CD4-positive, alpha-beta memory T cell (primary cell): ENCODE measurements at regions of chr16 and their contacts with region 1.

Region 1: GRCh38 chr16:88442727-88443576 is 10.1 kb upstream of the ZFPM1 start:
- DNase-seq: peak; percentile 67 to 84 (median 76)
- H3K4me3 ChIP-seq: no peak overlapping the region
- H3K4me3 Mint-ChIP-seq: peak overlapping the region in 1 of 8 donors; percentile 29
- H3K27ac ChIP-seq: no peak overlapping the region
- H3K27ac Mint-ChIP-seq: peak overlapping the region in 2 of 7 donors; percentile 24 to 41
- H3K4me1 ChIP-seq: peaks cover 6% of the 10 kb centered on the region
- H3K4me1 Mint-ChIP-seq: peaks cover 0 to 4% (median 3%) of the 10 kb centered on the region in 4 donors
- H3K27me3 ChIP-seq: no peaks in the 10 kb centered on the region
- H3K27me3 Mint-ChIP-seq: no peaks in the 10 kb centered on the region

Region 2: DNA sequence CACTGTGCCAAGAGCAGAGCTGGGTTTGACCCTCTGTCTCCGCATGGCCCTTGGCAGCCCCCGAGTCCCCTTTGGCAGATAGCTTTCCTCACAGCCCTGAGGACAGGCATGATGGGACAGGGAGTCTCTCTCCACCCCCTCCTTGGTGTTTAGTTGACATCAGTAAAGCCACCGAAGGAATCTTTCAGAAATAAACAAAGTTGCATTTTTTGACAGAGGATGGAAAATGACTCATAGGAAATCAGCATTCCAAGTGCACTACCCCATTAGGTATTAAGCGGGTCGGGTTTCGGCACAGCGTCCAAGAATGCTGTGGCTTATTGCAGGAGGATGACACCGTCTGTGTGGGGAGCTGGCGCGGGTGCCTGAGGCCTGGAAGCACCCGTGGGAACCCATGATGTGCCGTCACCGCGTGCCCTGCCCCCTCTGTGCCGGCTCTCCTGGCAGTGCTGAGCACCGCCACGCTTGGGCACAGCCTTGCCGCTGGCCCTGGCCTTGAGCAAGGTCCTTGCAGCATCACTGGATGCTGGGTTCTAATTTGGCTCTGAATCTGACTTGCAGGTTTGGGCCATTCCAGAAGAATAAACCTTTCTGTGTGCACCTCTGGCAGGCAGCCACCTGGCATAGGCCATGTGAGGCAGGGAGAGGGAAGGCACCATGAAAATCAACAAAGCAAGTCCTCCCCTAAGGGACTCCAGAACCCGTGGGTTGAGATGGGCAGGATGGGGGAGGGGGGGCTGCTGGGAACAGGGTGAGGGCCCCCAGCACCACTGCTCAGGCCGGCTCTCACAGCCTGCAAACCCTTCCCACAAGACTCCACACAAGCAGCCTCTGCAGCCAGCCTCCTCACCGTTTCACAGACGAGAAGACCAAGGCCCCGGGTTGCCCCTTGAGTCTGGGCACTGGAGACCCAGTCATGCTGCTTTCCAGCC is 110.7 kb before region 1 on chr16:
- CTCF ChIA-PET with region 1: no interaction called
- POLR2A ChIA-PET with region 1: no interaction called
- intact Hi-C with region 1: no loop called
- DNase-seq: no peak
- H3K4me3 ChIP-seq: no peak overlapping the region
- H3K4me3 Mint-ChIP-seq: no peak overlapping the region
- H3K27ac ChIP-seq: no peak overlapping the region
- H3K27ac Mint-ChIP-seq: no peak overlapping the region
- H3K4me1 ChIP-seq: no peaks in the 10 kb centered on the region
- H3K4me1 Mint-ChIP-seq: peaks cover 0 to 5% (median 1%) of the 10 kb centered on the region in 4 donors
- H3K27me3 ChIP-seq: no peaks in the 10 kb centered on the region
- H3K27me3 Mint-ChIP-seq: peaks cover 0 to 5% of the 10 kb centered on the region in 2 donors

Region 3: DNA sequence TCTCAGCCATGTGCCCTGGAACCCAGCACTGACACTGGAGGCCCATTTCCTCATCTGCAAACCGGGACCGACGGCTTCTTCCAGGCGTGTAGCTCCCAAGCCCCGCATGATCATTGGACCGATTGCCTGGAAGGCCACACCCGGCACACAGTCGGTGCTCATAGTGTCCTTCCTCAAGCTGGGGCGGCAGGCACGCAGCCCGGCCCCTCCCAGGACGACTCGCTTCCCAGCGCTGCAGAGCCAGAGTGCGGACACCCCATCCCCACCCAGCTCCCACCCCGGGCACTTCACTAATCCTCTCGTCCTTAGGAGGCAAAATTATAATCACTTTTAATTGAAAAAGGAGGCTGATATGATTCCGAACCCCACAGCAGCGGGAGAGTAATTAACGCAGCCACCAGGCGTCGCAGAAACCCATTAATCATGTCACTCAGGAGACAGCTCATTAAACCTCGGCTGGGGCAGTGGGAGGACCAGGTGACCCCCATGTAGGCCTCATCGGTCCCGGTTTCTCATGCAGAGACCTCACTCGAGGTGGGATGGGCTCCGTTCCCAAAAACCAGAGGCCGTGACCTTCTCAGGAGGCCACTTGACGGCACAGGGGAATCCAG is 27.1 kb before region 1 on chr16:
- CTCF ChIA-PET with region 1: no interaction called
- POLR2A ChIA-PET with region 1: no interaction called
- intact Hi-C with region 1: no loop called
- DNase-seq: no peak
- H3K4me3 ChIP-seq: no peak overlapping the region
- H3K4me3 Mint-ChIP-seq: no peak overlapping the region
- H3K27ac ChIP-seq: no peak overlapping the region
- H3K27ac Mint-ChIP-seq: no peak overlapping the region
- H3K4me1 ChIP-seq: no peaks in the 10 kb centered on the region
- H3K4me1 Mint-ChIP-seq: no peaks in the 10 kb centered on the region
- H3K27me3 ChIP-seq: no peaks in the 10 kb centered on the region
- H3K27me3 Mint-ChIP-seq: peaks cover 0 to 4% of the 10 kb centered on the region in 2 donors

Region 4: DNA sequence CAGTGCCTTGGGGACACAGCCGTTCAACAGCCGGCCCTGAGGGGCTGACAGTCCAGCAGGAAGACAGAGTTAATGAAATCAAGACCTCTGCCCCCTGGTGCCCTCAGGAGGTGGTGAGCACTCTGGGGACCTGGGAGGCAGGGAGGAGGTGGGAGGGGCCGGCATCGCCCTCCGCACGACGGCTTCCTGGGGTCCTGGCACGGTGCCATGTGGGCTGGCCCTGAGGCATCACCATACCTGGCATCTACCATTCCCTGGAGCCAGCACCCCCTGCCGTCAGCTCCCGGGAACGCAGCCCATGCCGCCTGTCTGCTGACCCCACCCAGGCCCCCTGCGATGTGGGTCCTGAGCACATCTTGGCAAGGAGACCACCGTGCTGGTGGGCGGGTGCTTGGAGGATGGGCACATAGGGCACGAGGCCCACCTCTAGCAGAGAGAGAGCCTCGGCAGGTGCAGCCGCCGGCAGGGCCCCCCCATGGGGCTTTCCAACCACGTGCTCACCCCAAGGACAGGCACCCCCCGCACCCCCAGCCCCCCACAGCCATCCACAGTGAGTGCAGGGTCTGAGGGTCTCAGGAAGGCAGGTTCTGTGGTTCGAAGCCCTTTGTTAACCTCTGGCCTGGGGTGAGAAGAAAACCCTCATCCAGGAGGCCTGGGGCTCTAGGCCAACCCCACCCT is 62.6 kb after region 1 on chr16:
- CTCF ChIA-PET with region 1: interaction called, 4 read pairs
- POLR2A ChIA-PET with region 1: no interaction called
- intact Hi-C with region 1: loop called (anchors 1 kb)
- DNase-seq: peak; percentile 61 to 79 (median 71)
- H3K4me3 ChIP-seq: no peak overlapping the region
- H3K4me3 Mint-ChIP-seq: peak overlapping the region in 1 of 8 donors; percentile 15
- H3K27ac ChIP-seq: no peak overlapping the region
- H3K27ac Mint-ChIP-seq: peak overlapping the region in 2 of 7 donors; percentile 24 to 78
- H3K4me1 ChIP-seq: no peaks in the 10 kb centered on the region
- H3K4me1 Mint-ChIP-seq: peaks cover 0 to 21% (median 4%) of the 10 kb centered on the region in 4 donors
- H3K27me3 ChIP-seq: no peaks in the 10 kb centered on the region
- H3K27me3 Mint-ChIP-seq: no peaks in the 10 kb centered on the region

Region 5: GRCh38 chr16:88527186-88527936 is 84.4 kb after region 1 on chr16:
- CTCF ChIA-PET with region 1: interaction called, 4 read pairs
- POLR2A ChIA-PET with region 1: no interaction called
- intact Hi-C with region 1: loop called (anchors 1 kb)
- DNase-seq: peak in 4 of 5 donors; percentile 46 to 70 (median 56)
- H3K4me3 ChIP-seq: no peak overlapping the region
- H3K4me3 Mint-ChIP-seq: no peak overlapping the region
- H3K27ac ChIP-seq: no peak overlapping the region
- H3K27ac Mint-ChIP-seq: no peak overlapping the region
- H3K4me1 ChIP-seq: no peaks in the 10 kb centered on the region
- H3K4me1 Mint-ChIP-seq: peaks cover 2 to 14% (median 4%) of the 10 kb centered on the region in 4 donors
- H3K27me3 ChIP-seq: no peaks in the 10 kb centered on the region
- H3K27me3 Mint-ChIP-seq: no peaks in the 10 kb centered on the region

Region 6: GRCh38 chr16:88561485-88562369 is 118.8 kb after region 1 on chr16:
- CTCF ChIA-PET with region 1: interaction called, 9 read pairs
- POLR2A ChIA-PET with region 1: no interaction called
- intact Hi-C with region 1: loop called (anchors 1 kb)
- DNase-seq: peak; percentile 40 to 56 (median 50)
- H3K4me3 ChIP-seq: no peak overlapping the region
- H3K4me3 Mint-ChIP-seq: no peak overlapping the region
- H3K27ac ChIP-seq: no peak overlapping the region
- H3K27ac Mint-ChIP-seq: peak overlapping the region in 3 of 7 donors; percentile 44 to 82 (median 57)
- H3K4me1 ChIP-seq: peaks cover 4% of the 10 kb centered on the region
- H3K4me1 Mint-ChIP-seq: peaks cover 2 to 4% (median 3%) of the 10 kb centered on the region in 4 donors
- H3K27me3 ChIP-seq: no peaks in the 10 kb centered on the region
- H3K27me3 Mint-ChIP-seq: peaks cover 0 to 4% of the 10 kb centered on the region in 2 donors